Activated CD4-positive, alpha-beta T cell treated with anti-CD3 and anti-CD28 coated beads, Interleukin-2, amount 10 ng/mL, durations not matched to agents 24 days and 14 days (primary cell): ENCODE measurements at regions of chr12 and their contacts with region 1.

Region 1: DNA sequence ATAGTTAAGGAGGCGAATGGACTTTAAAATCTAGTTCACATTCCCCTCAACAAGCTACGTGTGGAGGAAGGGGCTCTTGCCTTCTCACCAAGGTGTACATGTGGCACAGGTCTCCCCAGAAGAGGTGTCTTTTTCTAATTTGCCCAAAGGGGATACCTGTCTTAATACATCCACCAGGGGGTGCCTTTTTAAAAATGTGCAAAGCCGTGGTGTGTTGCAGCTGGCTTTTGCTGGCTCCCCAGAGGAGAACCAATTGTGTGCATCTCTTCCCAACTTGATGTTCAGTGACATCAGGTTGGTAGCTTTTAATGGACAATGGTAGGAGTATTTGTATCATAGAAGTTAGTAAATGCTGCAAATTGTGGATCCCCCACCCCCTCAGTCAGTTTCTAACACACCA is 33.8 kb downstream of the CREBL2 start:
- DNase-seq: peak; percentile 80
- H3K4me3 Mint-ChIP-seq: no peak overlapping the region
- H3K27ac Mint-ChIP-seq: peak overlapping the region; percentile 79
- H3K4me1 Mint-ChIP-seq: peaks cover 14% of the 10 kb centered on the region
- H3K27me3 Mint-ChIP-seq: no peaks in the 10 kb centered on the region

Region 2: GRCh38 chr12:12600255-12601034 is 45.0 kb before region 1 on chr12:
- intact Hi-C with region 1: no loop called
- DNase-seq: no peak
- H3K4me3 Mint-ChIP-seq: no peak overlapping the region
- H3K27ac Mint-ChIP-seq: no peak overlapping the region
- H3K4me1 Mint-ChIP-seq: no peaks in the 10 kb centered on the region
- H3K27me3 Mint-ChIP-seq: peaks cover 2% of the 10 kb centered on the region

Region 3: DNA sequence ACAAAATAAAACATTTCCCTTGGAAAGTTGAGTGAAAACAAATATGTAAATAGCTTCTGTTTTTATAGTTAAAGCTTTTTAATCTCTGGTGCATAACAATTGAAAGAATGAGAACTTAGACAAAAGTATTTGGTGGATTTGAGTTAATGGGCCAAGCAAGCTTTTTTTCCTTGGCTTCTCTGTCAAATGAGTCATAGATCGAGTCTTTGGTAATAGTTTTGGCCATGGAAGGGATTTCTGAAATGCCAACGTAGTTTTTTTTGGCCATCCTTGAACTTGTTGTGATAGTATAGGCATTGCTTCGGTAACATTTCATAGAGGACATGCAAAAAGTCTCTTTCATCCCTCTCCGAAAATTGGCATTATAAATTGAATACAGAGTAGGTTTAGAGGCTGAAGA is 15.6 kb after region 1 on chr12:
- intact Hi-C with region 1: loop called (anchors 1 kb)
- DNase-seq: no peak
- H3K4me3 Mint-ChIP-seq: no peak overlapping the region
- H3K27ac Mint-ChIP-seq: no peak overlapping the region
- H3K4me1 Mint-ChIP-seq: peaks cover under 1% of the 10 kb centered on the region
- H3K27me3 Mint-ChIP-seq: no peaks in the 10 kb centered on the region

Region 4: DNA sequence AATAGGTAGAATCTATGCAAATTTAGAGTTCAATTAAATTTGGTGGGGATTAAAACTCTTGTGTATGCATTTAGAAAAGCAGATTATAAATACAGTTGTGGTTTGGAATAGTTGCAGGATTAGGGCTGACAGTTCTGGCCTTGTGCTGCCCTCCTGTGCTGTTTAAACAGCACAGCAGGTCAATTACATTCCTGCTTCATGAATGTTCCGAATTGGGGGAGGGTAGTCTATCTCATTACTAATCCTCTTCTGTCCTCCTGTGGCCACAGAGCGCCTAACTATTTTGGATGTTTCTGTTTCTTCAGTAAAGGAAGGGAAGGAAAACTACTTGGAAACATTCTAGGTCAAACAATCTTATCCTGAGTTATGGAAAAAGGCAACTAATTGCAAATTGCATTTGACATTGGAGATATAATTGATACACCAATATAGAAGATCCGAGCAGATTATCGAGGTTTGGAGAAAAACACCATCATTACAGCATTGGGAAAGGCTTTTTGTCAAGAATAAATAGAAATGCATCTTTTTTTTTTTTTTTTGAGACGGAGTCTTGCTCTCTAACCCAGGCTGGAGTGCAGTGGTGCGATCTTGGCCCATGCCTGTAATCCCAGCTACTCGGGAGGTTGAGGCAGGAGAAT is 59.2 kb after region 1 on chr12:
- intact Hi-C with region 1: loop called (anchors 2 kb)
- DNase-seq: peak; percentile 77
- H3K4me3 Mint-ChIP-seq: no peak overlapping the region
- H3K27ac Mint-ChIP-seq: no peak overlapping the region
- H3K4me1 Mint-ChIP-seq: peaks cover 28% of the 10 kb centered on the region
- H3K27me3 Mint-ChIP-seq: no peaks in the 10 kb centered on the region